ENCODE measurements at regions of chr14 and their contacts with region 1.

Region 1: GRCh38 chr14:32702562-32702961 is 236.1 kb upstream of the NPAS3 start:
- DNase-seq: peak; percentile 77

Region 2: DNA sequence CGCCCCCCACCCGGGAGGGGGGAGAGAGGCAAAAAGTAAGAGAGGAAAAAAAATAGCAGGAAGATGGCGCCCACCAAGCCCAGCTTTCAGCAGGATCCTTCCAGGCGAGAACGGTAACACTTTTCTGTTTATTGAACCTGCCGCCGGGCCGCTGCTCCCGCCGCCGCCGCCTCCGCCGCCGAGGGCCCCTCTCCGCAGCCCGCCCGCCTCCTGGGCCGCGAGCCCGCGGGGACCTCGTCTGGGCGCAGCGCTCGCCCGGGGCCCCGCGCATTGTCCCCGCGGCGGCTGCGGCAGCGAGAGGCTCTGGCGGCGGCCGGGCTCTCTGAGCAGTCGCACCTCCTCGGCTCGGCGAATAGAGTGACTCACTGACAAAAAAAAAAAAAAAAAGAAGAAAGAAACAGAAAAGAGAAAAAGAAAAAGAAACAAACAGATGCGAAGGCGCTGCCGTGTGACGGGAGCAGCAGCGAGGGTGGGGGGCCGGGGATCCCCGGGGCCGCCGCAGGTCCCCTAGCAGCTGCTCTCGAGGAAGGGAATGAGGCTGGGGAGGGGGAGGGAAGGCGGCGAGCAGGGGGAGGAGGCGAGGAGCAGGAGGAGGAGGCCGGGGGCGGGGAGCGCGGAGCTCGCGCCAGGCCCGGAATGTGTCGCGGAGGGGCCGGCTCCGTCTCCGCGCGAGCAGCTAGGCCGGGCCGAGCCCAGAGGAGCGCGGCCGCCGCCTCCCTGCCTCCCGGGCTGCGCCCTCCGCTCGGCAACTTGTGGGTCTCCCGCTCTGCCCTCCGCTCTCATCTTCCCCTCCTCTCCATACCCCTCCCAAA is 236.9 kb after region 1 on chr14:
- intact Hi-C with region 1: loop called (anchors 10 kb)
- DNase-seq: peak; percentile 87

Measured in cardiac septum (tissue), 1 donor.